Activated CD4-positive, alpha-beta T cell treated with anti-CD3 and anti-CD28 coated beads for 36 hours (primary cell): ENCODE measurements at regions of chr11 and their contacts with region 1.

Region 1: DNA sequence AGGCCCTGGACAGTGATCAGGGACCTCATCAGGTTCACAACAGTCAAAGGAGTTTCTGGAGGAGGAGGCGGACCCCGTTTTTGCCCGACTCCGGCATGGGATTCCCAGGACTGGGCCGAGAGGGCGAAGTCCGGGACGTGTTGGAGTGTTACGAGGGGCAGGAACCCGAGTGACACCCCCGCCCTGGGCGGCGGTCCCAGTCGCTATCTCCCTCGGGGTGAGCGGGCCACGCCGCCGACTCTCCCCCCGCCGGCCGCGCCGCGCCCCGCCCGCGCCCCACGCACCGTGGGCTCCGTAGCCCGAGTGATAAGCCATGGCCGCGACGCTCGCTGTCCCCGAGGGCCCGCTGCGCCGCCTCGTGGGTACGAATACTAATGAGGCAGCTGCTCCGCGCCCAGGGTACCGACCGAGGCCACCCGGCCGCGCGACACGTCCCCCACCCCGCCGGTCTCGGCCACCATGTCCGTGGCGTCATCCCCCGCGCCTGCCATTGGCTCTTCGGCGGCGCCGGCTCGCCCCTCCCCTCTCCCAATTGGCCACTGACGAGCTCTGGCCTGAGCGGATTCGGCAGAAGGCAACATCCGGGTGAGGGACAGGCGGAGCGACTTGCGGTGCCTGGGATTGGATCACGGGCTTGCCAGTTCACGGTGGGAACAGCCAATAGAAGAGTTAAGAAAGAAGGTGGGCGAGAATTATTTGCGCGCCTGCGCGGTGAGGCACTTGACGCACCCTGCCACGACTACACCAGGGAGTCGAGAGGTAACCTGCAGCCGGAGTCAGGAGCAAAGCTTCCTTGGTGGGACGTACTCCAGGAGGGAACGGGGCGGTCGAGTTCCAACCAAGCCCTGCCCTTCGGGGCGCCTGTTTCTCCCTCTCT is at the start of gene YIF1A:
- DNase-seq: peak; percentile 99
- ATAC-seq: peak; percentile 97
- H3K4me3 Mint-ChIP-seq: peak within 1 kb of the TSS; percentile 89
- H3K27ac Mint-ChIP-seq: peak within 1 kb of the TSS; percentile 85
- H3K4me1 Mint-ChIP-seq: peaks cover 22% of the 10 kb centered on the region
- H3K27me3 Mint-ChIP-seq: peaks cover 8% of the 10 kb centered on the region
- total RNA-seq, gene YIF1A: 47.5 to 49.8 TPM

Region 2: GRCh38 chr11:66222358-66223149 is 66.4 kb before region 1 on chr11:
- CTCF ChIA-PET with region 1: interaction called, 13 read pairs
- POLR2A ChIA-PET with region 1: no interaction called
- intact Hi-C with region 1: loop called in 1 of 2 experiments (anchors 2 kb)
- DNase-seq: peak; percentile 97
- ATAC-seq: peak; percentile 94
- H3K4me3 Mint-ChIP-seq: peak overlapping the region; percentile 27
- H3K27ac Mint-ChIP-seq: peak overlapping the region; percentile 90
- H3K4me1 Mint-ChIP-seq: peaks cover 18% of the 10 kb centered on the region
- H3K27me3 Mint-ChIP-seq: no peaks in the 10 kb centered on the region

Region 3: DNA sequence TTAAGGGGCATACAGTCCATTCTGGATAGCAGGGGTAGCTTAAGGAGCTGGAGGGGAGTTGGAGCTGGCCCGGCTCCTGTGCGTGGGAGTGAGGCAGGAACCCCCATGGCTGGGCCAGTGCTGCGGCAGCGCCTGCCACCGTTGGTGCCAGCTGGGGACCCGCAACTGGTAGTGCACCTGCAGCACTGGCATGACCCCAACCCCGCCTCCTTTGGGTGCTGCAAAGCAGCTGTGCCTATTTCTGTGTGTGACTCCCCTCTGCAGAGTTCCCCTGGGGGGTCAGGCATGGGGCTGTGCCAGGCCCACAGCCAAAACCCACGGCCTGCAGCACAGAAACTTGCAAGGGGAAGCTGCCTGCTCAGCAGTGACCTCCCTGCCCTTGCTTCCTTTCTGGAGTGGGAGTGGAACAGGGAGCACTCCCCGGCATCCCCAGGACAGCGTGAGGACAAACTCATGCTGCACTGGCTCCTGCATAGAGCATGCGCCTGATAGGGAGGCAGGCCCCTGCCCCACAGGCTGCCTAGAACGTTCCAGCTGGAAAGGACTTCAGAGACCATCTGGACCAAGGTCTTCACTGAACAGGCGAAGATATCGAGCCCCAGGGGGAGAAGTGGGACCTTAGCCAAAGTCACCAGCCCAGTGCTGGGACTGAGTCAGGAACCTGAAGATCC is 46.7 kb before region 1 on chr11:
- CTCF ChIA-PET with region 1: no interaction called
- POLR2A ChIA-PET with region 1: no interaction called
- intact Hi-C with region 1: no loop called
- DNase-seq: no peak
- ATAC-seq: no peak
- H3K4me3 Mint-ChIP-seq: no peak overlapping the region
- H3K27ac Mint-ChIP-seq: peak overlapping the region; percentile 55
- H3K4me1 Mint-ChIP-seq: no peaks in the 10 kb centered on the region
- H3K27me3 Mint-ChIP-seq: no peaks in the 10 kb centered on the region

Region 4: GRCh38 chr11:66277471-66278362 is 11.2 kb before region 1 on chr11 and contains the start of gene CNIH2:
- CTCF ChIA-PET with region 1: interaction called, 14 read pairs
- POLR2A ChIA-PET with region 1: interaction called, 3 read pairs
- intact Hi-C with region 1: no loop called
- DNase-seq: peak; percentile 64
- ATAC-seq: peak; percentile 36
- H3K4me3 Mint-ChIP-seq: peak within 1 kb of the TSS; percentile 43
- H3K27ac Mint-ChIP-seq: no peak within 1 kb of the TSS
- H3K4me1 Mint-ChIP-seq: peaks cover 16% of the 10 kb centered on the region
- H3K27me3 Mint-ChIP-seq: no peaks in the 10 kb centered on the region
- total RNA-seq, gene CNIH2: 1.3 to 1.6 TPM

Region 5: GRCh38 chr11:66371627-66372415 is 82.9 kb after region 1 on chr11 and contains the start of gene SLC29A2:
- CTCF ChIA-PET with region 1: no interaction called
- POLR2A ChIA-PET with region 1: no interaction called
- intact Hi-C with region 1: loop called in 1 of 2 experiments (anchors 1 kb)
- DNase-seq: peak; percentile 92
- ATAC-seq: peak; percentile 87
- H3K4me3 Mint-ChIP-seq: peak within 1 kb of the TSS; percentile 91
- H3K27ac Mint-ChIP-seq: peak within 1 kb of the TSS; percentile 91
- H3K4me1 Mint-ChIP-seq: peaks cover 19% of the 10 kb centered on the region
- H3K27me3 Mint-ChIP-seq: no peaks in the 10 kb centered on the region
- total RNA-seq, gene SLC29A2: 13.6 to 14.4 TPM

Region 6: GRCh38 chr11:66545701-66546367 is 256.9 kb after region 1 on chr11 and contains the start of gene ZDHHC24:
- CTCF ChIA-PET with region 1: no interaction called
- POLR2A ChIA-PET with region 1: no interaction called
- intact Hi-C with region 1: loop called in 1 of 2 experiments (anchors 1 kb)
- DNase-seq: peak; percentile 95
- ATAC-seq: peak; percentile 94
- H3K4me3 Mint-ChIP-seq: peak within 1 kb of the TSS; percentile 76
- H3K27ac Mint-ChIP-seq: peak within 1 kb of the TSS; percentile 67
- H3K4me1 Mint-ChIP-seq: peaks cover 20% of the 10 kb centered on the region
- H3K27me3 Mint-ChIP-seq: peaks cover 5% of the 10 kb centered on the region
- total RNA-seq, gene ZDHHC24: 9.7 to 11.3 TPM